ENCODE measurements at regions of chr16 and their contacts with region 1.

Region 1: GRCh38 chr16:626787-627186 is 4.0 kb upstream of the WFIKKN1 start:
- DNase-seq: peak; percentile 72
- ATAC-seq: peak; percentile 79
- H3K4me3 ChIP-seq: 0 out of 4 replicates have a peak overlapping the region, but pooled peaks of 1 of the 2 experiments have one; percentile 20
- H3K27ac ChIP-seq: peak overlapping the region; percentile 83
- H3K4me1 ChIP-seq: peaks cover 31 to 56% of the 10 kb centered on the region in 2 experiments
- H3K27me3 ChIP-seq: no peaks in the 10 kb centered on the region
- CTCF ChIP-seq: no peak
- POLR2A ChIP-seq: no peak
- RAD21 ChIP-seq: no peak

Region 2: DNA sequence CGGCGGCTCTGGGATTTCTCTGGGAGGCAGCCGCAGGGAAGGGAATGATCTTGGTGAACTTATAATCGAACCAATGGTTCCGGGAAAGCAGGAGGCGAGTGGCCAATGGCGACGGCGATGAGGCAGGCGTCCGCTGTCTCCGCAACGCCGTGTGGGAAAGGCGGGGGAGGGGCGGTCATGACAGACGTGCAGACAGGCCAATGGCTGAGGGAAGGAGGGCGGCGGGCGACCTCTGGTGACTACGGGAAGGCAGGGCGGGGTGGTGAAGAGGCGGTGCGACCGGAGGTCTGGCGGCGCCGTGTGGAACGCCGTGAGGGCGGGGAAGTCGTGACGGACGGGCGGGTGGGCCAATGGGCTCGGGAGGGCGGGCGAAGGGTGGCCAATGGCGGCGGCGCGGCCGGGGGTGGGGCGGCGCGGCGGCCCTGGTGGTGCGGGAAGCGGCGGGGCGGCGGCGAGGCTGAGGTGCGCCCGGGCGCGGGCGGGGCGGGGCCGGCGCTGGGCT is 37.1 kb before region 1 on chr16 and contains the start of gene RAB40C:
- CTCF ChIA-PET with region 1: no interaction called
- POLR2A ChIA-PET with region 1: no interaction called
- RAD21 ChIA-PET with region 1: interaction called in 1 of 2 experiments, 3 read pairs
- intact Hi-C with region 1: loop called (anchors 5 kb)
- DNase-seq: peak; percentile 85
- ATAC-seq: peak; percentile 80
- H3K4me3 ChIP-seq: peak within 1 kb of the TSS; percentile 66 to 69
- H3K27ac ChIP-seq: peak within 1 kb of the TSS; percentile 99
- H3K4me1 ChIP-seq: peaks cover 31 to 47% of the 10 kb centered on the region in 2 experiments
- H3K27me3 ChIP-seq: no peaks in the 10 kb centered on the region
- CTCF ChIP-seq: no peak
- POLR2A ChIP-seq: no peak
- RAD21 ChIP-seq: no peak
- total RNA-seq, gene RAB40C: 14.1 TPM

Region 3: DNA sequence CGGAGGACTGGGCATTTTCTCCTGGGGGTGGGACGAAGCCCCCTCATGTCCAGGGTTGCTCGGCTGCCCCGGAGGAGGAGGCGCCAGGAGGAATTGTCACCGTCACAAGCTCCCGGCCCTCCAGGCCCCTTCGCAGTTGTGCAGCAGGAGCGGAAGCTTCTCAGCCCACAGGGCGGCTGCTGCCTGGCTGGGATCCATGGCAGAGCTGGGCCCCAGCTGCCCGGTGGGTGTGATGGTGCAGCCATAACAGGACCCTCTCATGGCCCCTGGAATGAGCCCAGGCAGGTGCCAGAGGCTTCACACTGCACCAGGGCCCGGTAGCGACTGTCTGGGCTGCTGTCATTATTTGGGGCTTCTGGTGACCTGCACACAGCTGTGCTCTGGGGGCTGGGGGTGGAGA is 228.7 kb after region 1 on chr16:
- CTCF ChIA-PET with region 1: no interaction called
- POLR2A ChIA-PET with region 1: no interaction called
- RAD21 ChIA-PET with region 1: no interaction called
- intact Hi-C with region 1: no loop called
- DNase-seq: no peak
- ATAC-seq: no peak
- H3K4me3 ChIP-seq: no peak overlapping the region
- H3K27ac ChIP-seq: no peak overlapping the region
- H3K4me1 ChIP-seq: no peaks in the 10 kb centered on the region
- H3K27me3 ChIP-seq: no peaks in the 10 kb centered on the region
- CTCF ChIP-seq: no peak
- POLR2A ChIP-seq: no peak
- RAD21 ChIP-seq: no peak